ENCODE measurements at regions of chr16 and their contacts with region 1.

Region 1: DNA sequence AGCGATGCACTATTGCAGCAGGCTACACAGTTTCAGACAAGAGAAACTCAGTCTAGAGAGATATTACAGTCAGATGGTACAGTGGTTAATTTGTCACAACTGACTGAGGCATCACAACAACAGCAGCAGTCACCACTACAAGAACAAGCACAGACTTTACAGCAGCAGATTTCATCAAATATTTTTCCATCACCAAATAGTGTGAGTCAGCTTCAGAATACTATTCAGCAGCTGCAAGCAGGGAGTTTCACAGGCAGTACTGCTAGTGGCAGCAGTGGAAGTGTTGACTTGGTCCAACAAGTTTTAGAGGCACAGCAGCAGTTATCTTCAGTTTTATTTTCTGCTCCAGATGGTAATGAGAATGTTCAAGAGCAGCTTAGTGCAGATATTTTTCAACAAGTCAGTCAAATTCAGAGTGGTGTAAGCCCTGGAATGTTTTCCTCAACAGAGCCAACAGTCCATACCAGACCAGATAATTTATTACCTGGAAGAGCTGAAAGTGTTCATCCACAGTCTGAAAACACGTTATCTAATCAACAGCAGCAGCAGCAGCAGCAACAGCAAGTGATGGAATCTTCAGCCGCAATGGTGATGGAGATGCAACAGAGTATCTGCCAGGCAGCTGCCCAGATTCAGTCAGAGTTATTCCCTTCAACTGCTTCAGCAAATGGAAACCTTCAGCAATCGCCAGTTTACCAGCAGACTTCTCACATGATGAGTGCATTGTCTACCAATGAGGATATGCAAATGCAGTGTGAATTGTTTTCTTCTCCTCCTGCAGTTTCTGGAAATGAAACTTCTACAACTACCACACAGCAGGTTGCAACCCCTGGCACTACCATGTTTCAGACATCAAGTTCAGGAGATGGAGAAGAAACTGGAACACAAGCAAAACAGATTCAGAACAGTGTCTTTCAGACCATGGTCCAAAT is 34.1 kb downstream of the NQO1 start:
- DNase-seq: peak; percentile 73
- ATAC-seq: peak; percentile 77
- H3K4me3 ChIP-seq: no peak overlapping the region
- H3K27ac ChIP-seq: no peak overlapping the region
- H3K4me1 ChIP-seq: 0 out of 2 replicates have a peak, but pooled peaks cover 2% of the 10 kb centered on the region
- H3K27me3 ChIP-seq: no peaks in the 10 kb centered on the region
- CTCF ChIP-seq: no peak
- POLR2A ChIP-seq: no peak
- RAD21 ChIP-seq: no peak

Region 2: GRCh38 chr16:69589434-69590269 is 102.6 kb before region 1 on chr16:
- CTCF ChIA-PET with region 1: no interaction called
- POLR2A ChIA-PET with region 1: no interaction called
- dilution Hi-C with region 1: no loop called
- in situ Hi-C with region 1: no loop called
- intact Hi-C with region 1: loop called (anchors 10 kb)
- DNase-seq: no peak
- ATAC-seq: no peak
- H3K4me3 ChIP-seq: no peak overlapping the region
- H3K27ac ChIP-seq: no peak overlapping the region
- H3K4me1 ChIP-seq: no peaks in the 10 kb centered on the region
- H3K27me3 ChIP-seq: no peaks in the 10 kb centered on the region
- CTCF ChIP-seq: no peak
- POLR2A ChIP-seq: no peak
- RAD21 ChIP-seq: no peak